ENCODE measurements at regions of chr15 and their contacts with region 1.

Region 1: DNA sequence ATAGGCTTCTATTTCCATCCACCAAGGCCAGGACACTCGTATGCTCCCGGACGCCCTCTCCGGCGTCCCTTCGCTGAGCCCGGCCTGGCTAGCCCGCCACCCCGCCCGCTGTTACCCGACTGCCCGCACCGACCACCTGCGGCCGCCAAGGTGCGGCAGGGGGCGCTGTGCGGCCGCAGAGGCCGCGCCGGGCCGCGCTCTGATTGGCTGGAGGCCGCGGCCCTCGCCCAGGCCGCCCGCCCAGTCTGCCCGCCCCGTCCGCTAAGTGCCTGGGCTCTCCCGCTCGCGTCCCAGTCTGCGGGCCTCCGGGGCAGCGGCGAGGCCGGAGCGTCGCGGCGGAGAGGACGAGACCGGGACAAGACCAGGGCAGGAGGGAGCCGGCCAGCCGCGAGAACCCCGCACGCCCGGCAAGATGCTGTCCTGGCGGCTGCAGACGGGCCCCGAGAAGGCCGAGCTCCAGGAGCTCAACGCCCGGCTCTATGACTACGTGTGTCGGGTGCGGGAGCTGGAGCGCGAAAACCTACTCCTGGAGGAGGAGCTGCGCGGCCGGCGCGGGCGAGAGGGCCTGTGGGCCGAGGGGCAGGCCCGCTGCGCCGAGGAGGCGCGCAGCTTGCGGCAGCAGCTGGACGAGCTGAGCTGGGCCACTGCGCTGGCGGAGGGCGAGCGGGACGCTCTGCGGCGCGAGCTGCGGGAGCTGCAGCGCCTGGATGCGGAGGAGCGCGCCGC is at the start of gene SYNM:
- DNase-seq: peak; percentile 77
- ATAC-seq: peak; percentile 92
- H3K4me3 ChIP-seq: peak within 1 kb of the TSS; percentile 36 to 49
- H3K27ac ChIP-seq: peak within 1 kb of the TSS; percentile 44; the same call in 1 of the 2 replicates
- H3K4me1 ChIP-seq: peaks cover 3 to 15% of the 10 kb centered on the region in 2 experiments; a peak in 3 of 4 replicates
- H3K27me3 ChIP-seq: no peaks in the 10 kb centered on the region
- CTCF ChIP-seq: peak; percentile 70 to 76 (median 74)
- POLR2A ChIP-seq: peak; percentile 29
- RAD21 ChIP-seq: peak; percentile 74
- total RNA-seq, gene SYNM: 3.3 TPM

Region 2: GRCh38 chr15:99014803-99015676 is 89.9 kb before region 1 on chr15:
- CTCF ChIA-PET with region 1: no interaction called
- POLR2A ChIA-PET with region 1: no interaction called
- RAD21 ChIA-PET with region 1: no interaction called
- intact Hi-C with region 1: no loop called
- DNase-seq: peak; percentile 36
- ATAC-seq: peak; percentile 95
- H3K4me3 ChIP-seq: peak overlapping the region; percentile 64 to 71
- H3K27ac ChIP-seq: peak overlapping the region; percentile 93
- H3K4me1 ChIP-seq: peaks cover 8 to 26% of the 10 kb centered on the region in 2 experiments
- H3K27me3 ChIP-seq: no peaks in the 10 kb centered on the region
- CTCF ChIP-seq: no peak
- POLR2A ChIP-seq: no peak
- RAD21 ChIP-seq: no peak

Region 3: GRCh38 chr15:99213187-99213811 is 108.3 kb after region 1 on chr15:
- CTCF ChIA-PET with region 1: interaction called, 7 read pairs
- POLR2A ChIA-PET with region 1: no interaction called
- RAD21 ChIA-PET with region 1: interaction called, 3 read pairs
- intact Hi-C with region 1: loop called (anchors 1 kb)
- DNase-seq: peak; percentile 32
- ATAC-seq: peak; percentile 86
- H3K4me3 ChIP-seq: no peak overlapping the region
- H3K27ac ChIP-seq: no peak overlapping the region
- H3K4me1 ChIP-seq: no peaks in the 10 kb centered on the region
- H3K27me3 ChIP-seq: no peaks in the 10 kb centered on the region
- CTCF ChIP-seq: peak; percentile 85 to 97 (median 93)
- POLR2A ChIP-seq: no peak
- RAD21 ChIP-seq: peak; percentile 95

Region 4: GRCh38 chr15:99250494-99251435 is 145.8 kb after region 1 on chr15:
- CTCF ChIA-PET with region 1: interaction called, 3 read pairs
- POLR2A ChIA-PET with region 1: no interaction called
- RAD21 ChIA-PET with region 1: no interaction called
- intact Hi-C with region 1: loop called (anchors 5 kb)
- DNase-seq: peak; percentile 97
- ATAC-seq: peak; percentile 97
- H3K4me3 ChIP-seq: peak overlapping the region; percentile 77 to 83
- H3K27ac ChIP-seq: peak overlapping the region; percentile 70
- H3K4me1 ChIP-seq: peaks cover 11 to 27% of the 10 kb centered on the region in 2 experiments; a peak in 3 of 4 replicates
- H3K27me3 ChIP-seq: no peaks in the 10 kb centered on the region
- CTCF ChIP-seq: no peak
- POLR2A ChIP-seq: no peak
- RAD21 ChIP-seq: no peak

Measured in HCT116 (cell line).